ENCODE measurements at regions of chr16 and their contacts with region 1.

Region 1: DNA sequence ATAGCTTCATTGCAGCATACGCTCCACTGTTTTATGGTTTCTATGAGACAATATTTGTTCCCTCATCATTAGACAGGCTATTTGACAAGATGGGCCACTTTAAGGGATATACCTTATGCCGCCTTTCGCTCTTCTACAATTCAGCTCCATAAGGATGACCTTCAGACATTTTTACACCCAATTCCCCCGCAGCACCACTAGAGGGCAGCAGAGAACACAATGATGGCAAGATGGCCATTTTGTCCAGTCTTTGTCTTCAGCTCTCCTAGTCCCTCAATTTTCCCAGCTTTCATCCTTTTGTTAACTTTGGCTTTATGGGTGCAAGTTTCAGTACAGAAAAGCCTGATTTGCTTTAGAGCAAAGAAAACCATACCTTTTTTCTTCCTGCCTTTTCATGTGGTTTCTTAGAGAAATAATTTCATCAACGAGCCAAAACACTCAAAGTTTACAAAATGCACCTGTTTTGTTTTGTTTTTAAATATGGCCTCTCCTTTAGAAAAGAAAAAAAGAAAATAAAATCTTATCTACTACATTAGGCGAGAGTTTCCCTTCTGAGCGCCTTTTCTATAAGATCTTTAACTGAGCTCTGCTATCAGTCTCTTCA is 355.3 kb downstream of the TOX3 start:
- DNase-seq: peak; percentile 53 to 88 (median 63)
- H3K4me3 ChIP-seq: no peak overlapping the region
- H3K27ac ChIP-seq: no peak overlapping the region
- H3K27me3 ChIP-seq: no peaks in the 10 kb centered on the region
- CTCF ChIP-seq: peak; percentile 84 to 99 (median 94)

Region 2: GRCh38 chr16:51967646-51968045 is 224.0 kb before region 1 on chr16:
- intact Hi-C with region 1: no loop called
- DNase-seq: no peak
- H3K4me3 ChIP-seq: no peak overlapping the region
- H3K27ac ChIP-seq: no peak overlapping the region
- H3K27me3 ChIP-seq: peaks cover 0 to 4% (median 0%) of the 10 kb centered on the region in 45 donors
- CTCF ChIP-seq: no peak

Region 3: DNA sequence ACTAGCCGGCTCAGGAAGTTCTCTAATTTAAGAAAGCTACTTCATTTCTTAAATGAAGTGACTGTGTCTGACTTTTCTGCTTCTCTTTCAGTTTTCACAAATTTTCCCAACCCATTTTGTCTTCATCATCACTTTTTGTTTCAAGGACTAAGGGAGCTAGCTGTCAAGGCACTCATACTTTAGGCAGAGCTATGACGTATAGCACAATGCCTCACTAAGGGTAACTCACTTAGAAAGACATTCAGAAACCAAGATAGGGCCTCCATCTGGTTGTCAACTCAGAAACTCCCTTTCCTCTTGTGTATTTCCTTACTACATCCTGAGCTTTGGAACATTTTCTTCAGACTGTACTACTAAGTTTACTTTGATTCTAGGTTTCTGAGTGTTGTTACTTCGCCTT is 42.6 kb before region 1 on chr16:
- intact Hi-C with region 1: no loop called
- DNase-seq: no peak
- H3K4me3 ChIP-seq: no peak overlapping the region
- H3K27ac ChIP-seq: no peak overlapping the region
- H3K27me3 ChIP-seq: no peaks in the 10 kb centered on the region
- CTCF ChIP-seq: no peak

Region 4: GRCh38 chr16:52912565-52913173 is 721.0 kb after region 1 on chr16:
- intact Hi-C with region 1: loop called (anchors 2 to 5 kb)
- DNase-seq: peak; percentile 33 to 85 (median 76)
- H3K4me3 ChIP-seq: no peak overlapping the region
- H3K27ac ChIP-seq: no peak overlapping the region
- H3K27me3 ChIP-seq: peaks cover 0 to 2% (median 0%) of the 10 kb centered on the region in 45 donors
- CTCF ChIP-seq: peak; percentile 43 to 96 (median 85)

Region 5: GRCh38 chr16:53022374-53022773 is 830.7 kb after region 1 on chr16:
- intact Hi-C with region 1: loop called in 1 of 2 experiments (anchors 5 kb)
- DNase-seq: peak in 7 of 10 donors; percentile 32 to 60 (median 44)
- H3K4me3 ChIP-seq: no peak overlapping the region
- H3K27ac ChIP-seq: no peak overlapping the region
- H3K27me3 ChIP-seq: no peaks in the 10 kb centered on the region
- CTCF ChIP-seq: peak; percentile 34 to 77 (median 64)